Body of pancreas (tissue), 4 donors: ENCODE measurements at regions of chr1 and their contacts with region 1.

Region 1: DNA sequence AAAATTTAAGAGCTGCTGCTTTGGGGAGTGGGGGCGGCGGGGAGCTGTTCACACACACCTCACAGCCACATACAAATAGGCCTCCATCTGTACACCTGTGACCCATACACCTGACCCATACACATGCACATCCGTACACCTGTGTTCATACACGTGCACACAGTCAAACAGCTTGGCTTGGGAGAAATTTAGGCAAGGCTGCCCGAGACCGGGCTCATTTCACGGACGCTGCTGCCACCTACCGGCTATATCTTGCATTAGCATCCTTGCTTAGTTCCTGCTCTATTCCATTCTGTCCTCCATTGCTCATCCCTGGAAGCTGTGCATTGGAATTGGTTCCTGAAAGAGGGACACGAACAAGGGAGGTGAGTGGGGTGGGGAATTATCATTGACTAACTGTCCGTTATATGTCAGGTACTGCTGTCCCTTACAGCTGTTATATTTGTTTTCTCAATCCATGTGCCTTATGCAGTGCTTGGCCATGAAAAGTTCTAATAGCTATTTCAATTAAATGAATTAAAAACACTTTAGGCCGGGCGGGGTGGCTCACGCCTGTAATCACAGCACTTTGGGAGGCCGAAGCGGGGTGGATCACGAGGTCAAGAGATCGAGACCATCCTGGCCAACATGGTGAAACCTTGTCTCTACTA is 37.1 kb upstream of the EPB41 start:
- DNase-seq: peak; percentile 84 to 88 (median 86)
- ATAC-seq: peak; percentile 79
- H3K4me3 ChIP-seq: no peak overlapping the region
- H3K27ac ChIP-seq: no peak overlapping the region
- H3K4me1 ChIP-seq: peaks cover 5% of the 10 kb centered on the region
- H3K27me3 ChIP-seq: no peaks in the 10 kb centered on the region
- CTCF ChIP-seq: peak; percentile 86 to 96 (median 93)
- POLR2A ChIP-seq: no peak

Region 2: GRCh38 chr1:28789412-28789811 is 87.8 kb before region 1 on chr1:
- intact Hi-C with region 1: loop called (anchors 5 kb)
- DNase-seq: no peak
- ATAC-seq: no peak
- H3K4me3 ChIP-seq: no peak overlapping the region
- H3K27ac ChIP-seq: no peak overlapping the region
- H3K4me1 ChIP-seq: no peaks in the 10 kb centered on the region
- H3K27me3 ChIP-seq: no peaks in the 10 kb centered on the region
- CTCF ChIP-seq: no peak
- POLR2A ChIP-seq: no peak

Region 3: GRCh38 chr1:29033829-29034466 is 156.7 kb after region 1 on chr1:
- intact Hi-C with region 1: loop called (anchors 5 kb)
- DNase-seq: no peak
- ATAC-seq: peak; percentile 63
- H3K4me3 ChIP-seq: no peak overlapping the region
- H3K27ac ChIP-seq: no peak overlapping the region
- H3K4me1 ChIP-seq: no peaks in the 10 kb centered on the region
- H3K27me3 ChIP-seq: no peaks in the 10 kb centered on the region
- CTCF ChIP-seq: peak in 6 of 7 experiments; percentile 40 to 85 (median 76)
- POLR2A ChIP-seq: no peak

Region 4: GRCh38 chr1:29197585-29197924 is 320.3 kb after region 1 on chr1:
- intact Hi-C with region 1: loop called (anchors 5 kb)
- DNase-seq: peak in 2 of 4 donors; percentile 27 to 39
- ATAC-seq: no peak
- H3K4me3 ChIP-seq: no peak overlapping the region
- H3K27ac ChIP-seq: no peak overlapping the region
- H3K4me1 ChIP-seq: peaks cover 7% of the 10 kb centered on the region
- H3K27me3 ChIP-seq: no peaks in the 10 kb centered on the region
- CTCF ChIP-seq: peak in 2 of 7 experiments; percentile 29 to 34
- POLR2A ChIP-seq: no peak